ENCODE measurements at regions of chr14 and their contacts with region 1.

Region 1: GRCh38 chr14:53152890-53153701 is at the start of gene DDHD1:
- DNase-seq: peak; percentile 82
- H3K4me3 Mint-ChIP-seq: peak within 1 kb of the TSS; percentile 100
- H3K27ac Mint-ChIP-seq: peak within 1 kb of the TSS; percentile 95
- H3K4me1 Mint-ChIP-seq: peaks cover 36% of the 10 kb centered on the region
- H3K27me3 Mint-ChIP-seq: no peaks in the 10 kb centered on the region
- total RNA-seq, gene DDHD1: 20.1 to 20.4 TPM

Region 2: GRCh38 chr14:52413729-52414408 is 739.2 kb before region 1 on chr14:
- CTCF ChIA-PET with region 1: no interaction called
- intact Hi-C with region 1: loop called (anchors 10 kb)
- DNase-seq: no peak
- H3K4me3 Mint-ChIP-seq: peak overlapping the region; percentile 14
- H3K27ac Mint-ChIP-seq: peak overlapping the region; percentile 85
- H3K4me1 Mint-ChIP-seq: peaks cover 39% of the 10 kb centered on the region
- H3K27me3 Mint-ChIP-seq: no peaks in the 10 kb centered on the region

Region 3: DNA sequence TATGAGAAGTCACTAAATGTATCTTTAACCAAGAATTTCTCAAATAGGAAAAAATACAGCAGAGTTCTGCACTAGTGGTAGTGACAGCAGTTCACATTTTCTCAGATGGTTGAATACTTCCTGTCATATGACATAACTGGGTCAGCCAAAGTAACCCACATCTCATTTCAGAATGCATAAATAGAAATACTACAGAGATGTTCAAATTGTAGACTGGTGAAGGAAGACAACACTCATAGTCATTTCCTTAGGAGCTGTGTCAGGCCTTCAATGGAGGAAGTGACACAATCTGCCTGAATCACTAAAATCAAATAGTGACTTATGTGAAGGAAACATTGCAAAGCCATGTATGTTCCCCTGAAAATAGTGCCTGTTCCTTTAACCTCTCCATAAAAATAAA is 234.6 kb before region 1 on chr14:
- CTCF ChIA-PET with region 1: no interaction called
- intact Hi-C with region 1: loop called (anchors 2 kb)
- DNase-seq: peak; percentile 47
- H3K4me3 Mint-ChIP-seq: no peak overlapping the region
- H3K27ac Mint-ChIP-seq: peak overlapping the region; percentile 50
- H3K4me1 Mint-ChIP-seq: peaks cover 17% of the 10 kb centered on the region
- H3K27me3 Mint-ChIP-seq: no peaks in the 10 kb centered on the region

Region 4: DNA sequence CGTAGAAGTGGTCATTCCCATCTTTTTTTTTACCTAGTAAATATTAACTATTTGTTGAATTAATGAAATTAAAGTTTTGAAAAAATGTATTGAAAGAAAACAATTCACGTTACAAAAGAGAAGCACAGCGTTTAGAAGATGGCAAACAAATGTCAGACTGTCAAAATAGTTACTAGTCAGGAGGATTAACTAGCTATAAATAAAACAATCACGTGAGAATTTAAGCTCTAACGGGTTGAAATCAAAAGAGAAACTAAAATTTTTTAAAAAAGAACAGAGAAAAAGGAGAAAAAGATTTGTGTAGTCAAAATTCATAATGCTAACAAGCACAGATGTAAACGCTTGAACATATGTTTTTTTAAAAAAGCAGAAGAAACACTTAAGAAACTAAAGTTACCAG is 26.4 kb before region 1 on chr14:
- CTCF ChIA-PET with region 1: no interaction called
- intact Hi-C with region 1: loop called (anchors 2 kb)
- DNase-seq: no peak
- H3K4me3 Mint-ChIP-seq: peak overlapping the region; percentile 56
- H3K27ac Mint-ChIP-seq: peak overlapping the region; percentile 72
- H3K4me1 Mint-ChIP-seq: peaks cover 38% of the 10 kb centered on the region
- H3K27me3 Mint-ChIP-seq: no peaks in the 10 kb centered on the region

Region 5: DNA sequence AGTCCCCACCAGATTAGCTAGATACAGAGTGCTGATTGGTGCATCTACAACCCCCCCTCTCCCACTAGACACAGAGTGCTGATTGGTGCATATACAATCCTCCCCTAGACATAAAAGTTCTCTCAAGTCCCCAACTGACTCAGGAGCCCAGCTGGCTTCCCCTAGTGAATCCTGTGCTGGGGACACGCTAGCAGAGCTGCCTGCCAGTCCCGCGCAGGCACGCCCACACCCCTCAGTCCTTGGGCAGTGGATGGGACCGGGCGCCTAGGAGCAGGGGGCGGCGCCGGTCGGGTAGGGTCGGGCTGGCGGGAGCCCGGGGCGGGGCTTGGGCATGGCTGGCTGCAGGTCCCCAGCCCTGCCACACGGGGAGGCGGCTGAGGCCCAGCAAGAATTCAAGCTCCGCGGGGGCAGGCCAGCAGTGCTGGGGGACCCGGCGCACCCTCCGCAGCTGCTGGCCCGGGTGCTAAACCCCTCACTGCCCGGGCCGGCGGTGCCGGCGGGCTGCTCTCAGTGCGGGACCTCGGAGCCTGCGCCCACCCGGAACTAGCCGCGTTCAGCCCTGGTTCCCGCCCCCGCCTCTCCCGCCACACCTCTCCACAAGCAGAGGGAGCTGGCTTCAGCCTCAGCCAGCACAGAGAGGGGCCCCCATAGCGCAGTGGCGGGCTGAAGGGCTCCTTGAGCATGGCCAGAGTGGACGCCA is 64.3 kb after region 1 on chr14:
- CTCF ChIA-PET with region 1: no interaction called
- intact Hi-C with region 1: loop called (anchors 2 kb)
- DNase-seq: peak; percentile 79
- H3K4me3 Mint-ChIP-seq: peak overlapping the region; percentile 78
- H3K27ac Mint-ChIP-seq: peak overlapping the region; percentile 65
- H3K4me1 Mint-ChIP-seq: peaks cover 8% of the 10 kb centered on the region
- H3K27me3 Mint-ChIP-seq: no peaks in the 10 kb centered on the region

Region 6: GRCh38 chr14:53710615-53711014 is 557.5 kb after region 1 on chr14:
- CTCF ChIA-PET with region 1: no interaction called
- intact Hi-C with region 1: no loop called
- DNase-seq: no peak
- H3K4me3 Mint-ChIP-seq: no peak overlapping the region
- H3K27ac Mint-ChIP-seq: no peak overlapping the region
- H3K4me1 Mint-ChIP-seq: no peaks in the 10 kb centered on the region
- H3K27me3 Mint-ChIP-seq: no peaks in the 10 kb centered on the region